IMR-90 (cell line): ENCODE measurements at regions of chr1 and their contacts with region 1.

Region 1: GRCh38 chr1:151340870-151341754 is 5.9 kb downstream of the RFX5 start:
- DNase-seq: peak; percentile 86
- ATAC-seq: peak; percentile 96
- H3K4me3 ChIP-seq: no peak overlapping the region
- H3K27ac ChIP-seq: no peak overlapping the region
- H3K4me1 ChIP-seq: peaks cover 2% of the 10 kb centered on the region
- H3K27me3 ChIP-seq: no peaks in the 10 kb centered on the region
- CTCF ChIP-seq: peak; percentile 85
- POLR2A ChIP-seq: no peak
- RAD21 ChIP-seq: peak; percentile 85

Region 2: DNA sequence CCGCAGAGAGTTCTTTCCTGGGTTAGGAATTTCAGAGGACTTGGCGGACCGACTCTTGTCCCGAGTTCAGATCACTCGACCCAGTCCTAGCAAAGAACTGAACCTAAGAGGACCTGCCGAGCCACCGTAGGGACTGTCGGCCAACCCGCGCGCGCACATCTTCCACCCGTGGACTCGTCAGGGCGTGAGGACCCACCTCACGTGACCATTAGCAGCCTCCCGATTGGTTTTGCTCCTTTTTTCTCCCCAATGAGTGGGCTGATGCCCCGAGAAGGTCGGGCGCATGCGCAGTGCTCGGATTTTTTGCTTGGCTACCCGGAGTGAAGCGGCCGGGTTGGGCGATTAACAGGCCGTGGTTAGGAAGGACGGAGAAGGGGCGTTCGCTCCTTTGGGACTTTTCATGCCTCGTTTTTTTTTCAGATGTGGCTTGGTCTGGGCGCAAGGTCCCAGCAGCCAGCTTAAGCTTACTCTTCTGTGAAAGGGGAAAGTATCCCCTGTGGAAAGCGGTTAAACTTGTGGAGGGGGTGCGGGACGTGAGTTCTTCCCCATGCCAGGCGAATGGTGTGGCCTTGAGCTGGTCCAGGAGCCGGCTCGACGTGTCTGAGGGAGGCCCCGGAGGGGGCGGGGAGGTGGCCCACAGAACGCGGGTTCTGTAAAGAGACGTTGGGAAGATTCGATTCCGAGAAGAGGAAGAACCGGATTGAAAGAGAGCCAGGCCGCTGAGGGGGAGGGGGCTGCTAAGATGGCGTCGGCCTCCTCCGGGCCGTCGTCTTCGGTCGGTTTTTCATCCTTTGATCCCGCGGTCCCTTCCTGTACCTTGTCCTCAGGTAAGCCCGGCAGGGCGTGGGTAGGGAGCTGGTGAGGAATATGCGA is 142.6 kb before region 1 on chr1 and contains the start of gene PIP5K1A:
- CTCF ChIA-PET with region 1: no interaction called
- POLR2A ChIA-PET with region 1: no interaction called
- dilution Hi-C with region 1: no loop called
- in situ Hi-C with region 1: no loop called
- intact Hi-C with region 1: loop called (anchors 5 kb)
- DNase-seq: peak; percentile 97
- ATAC-seq: peak; percentile 86
- H3K4me3 ChIP-seq: peak within 1 kb of the TSS; percentile 98
- H3K27ac ChIP-seq: peak within 1 kb of the TSS; percentile 96
- H3K4me1 ChIP-seq: peaks cover 5% of the 10 kb centered on the region; the same call in 1 of the 2 replicates
- H3K27me3 ChIP-seq: no peaks in the 10 kb centered on the region
- CTCF ChIP-seq: no peak
- POLR2A ChIP-seq: peak; percentile 88
- RAD21 ChIP-seq: no peak
- total RNA-seq, gene PIP5K1A: 52.5 and 59.1 TPM in 2 replicates

Region 3: GRCh38 chr1:151294742-151295462 is 46.2 kb before region 1 on chr1:
- CTCF ChIA-PET with region 1: interaction called, 6 read pairs
- POLR2A ChIA-PET with region 1: no interaction called
- dilution Hi-C with region 1: no loop called
- in situ Hi-C with region 1: loop called (anchors 5 kb)
- intact Hi-C with region 1: no loop called
- DNase-seq: no peak
- ATAC-seq: no peak
- H3K4me3 ChIP-seq: no peak overlapping the region
- H3K27ac ChIP-seq: no peak overlapping the region
- H3K4me1 ChIP-seq: no peaks in the 10 kb centered on the region
- H3K27me3 ChIP-seq: no peaks in the 10 kb centered on the region
- CTCF ChIP-seq: no peak
- POLR2A ChIP-seq: no peak
- RAD21 ChIP-seq: no peak

Region 4: DNA sequence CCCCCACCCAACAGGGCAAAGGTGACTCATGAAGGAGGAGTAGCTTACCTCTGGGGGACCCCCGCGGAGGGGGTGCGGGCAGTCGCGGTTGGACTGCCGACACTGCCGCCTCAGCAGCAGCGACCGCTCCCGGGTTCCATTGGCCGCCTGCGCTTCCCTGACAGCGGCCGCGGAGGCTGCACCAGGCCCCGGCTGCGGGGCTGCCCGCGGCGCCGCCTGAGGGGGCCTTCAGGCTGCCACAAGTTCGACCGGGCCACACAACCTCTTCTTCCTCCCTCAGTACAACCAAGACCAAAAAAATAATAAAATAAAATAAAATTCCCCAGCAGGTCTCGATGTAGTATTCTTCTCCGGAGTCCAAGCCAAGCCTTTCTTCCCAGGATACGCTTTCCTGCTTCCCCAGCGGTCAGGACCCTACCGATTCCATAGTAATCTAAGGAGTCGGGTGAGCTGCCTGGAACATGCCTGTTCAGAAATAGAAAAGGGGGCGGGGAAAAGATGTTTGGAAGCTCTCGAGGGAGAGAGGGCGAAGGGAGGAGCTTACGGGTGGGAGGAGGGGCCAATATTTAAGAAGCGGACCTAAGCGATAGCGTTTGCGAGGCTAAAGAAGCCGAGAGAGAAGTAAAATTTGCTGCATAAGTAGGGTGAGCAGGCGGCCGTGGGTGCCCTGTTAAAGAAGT is 13.7 kb before region 1 on chr1 and contains the start of gene PI4KB:
- CTCF ChIA-PET with region 1: interaction called, 11 read pairs
- POLR2A ChIA-PET with region 1: interaction called, 4 read pairs
- dilution Hi-C with region 1: no loop called
- in situ Hi-C with region 1: no loop called
- intact Hi-C with region 1: no loop called
- DNase-seq: peak; percentile 98
- ATAC-seq: peak; percentile 96
- H3K4me3 ChIP-seq: peak within 1 kb of the TSS; percentile 88
- H3K27ac ChIP-seq: peak within 1 kb of the TSS; percentile 88
- H3K4me1 ChIP-seq: peaks cover 9% of the 10 kb centered on the region
- H3K27me3 ChIP-seq: no peaks in the 10 kb centered on the region
- CTCF ChIP-seq: no peak
- POLR2A ChIP-seq: peak; percentile 79
- RAD21 ChIP-seq: no peak
- total RNA-seq, gene PI4KB: 77.2 and 94.5 TPM in 2 replicates